ENCODE measurements at regions of chr19 and their contacts with region 1.

Region 1: GRCh38 chr19:6460101-6460853 is 685 bp upstream of the SLC25A23 start:
- DNase-seq: peak; percentile 93 to 98 (median 96)
- ATAC-seq: peak; percentile 85
- H3K4me3 ChIP-seq: peak overlapping the region; percentile 73 to 87
- H3K4me3 Mint-ChIP-seq: peak overlapping the region; percentile 94
- H3K27ac ChIP-seq: peak overlapping the region; percentile 62 to 69
- H3K27ac Mint-ChIP-seq: peak overlapping the region; percentile 81
- H3K4me1 ChIP-seq: peaks cover 20% of the 10 kb centered on the region
- H3K4me1 Mint-ChIP-seq: peaks cover 32% of the 10 kb centered on the region
- H3K27me3 ChIP-seq: peaks cover 0 to 3% of the 10 kb centered on the region in 2 experiments
- H3K27me3 Mint-ChIP-seq: no peaks in the 10 kb centered on the region
- CTCF ChIP-seq: peak; percentile 54

Region 2: DNA sequence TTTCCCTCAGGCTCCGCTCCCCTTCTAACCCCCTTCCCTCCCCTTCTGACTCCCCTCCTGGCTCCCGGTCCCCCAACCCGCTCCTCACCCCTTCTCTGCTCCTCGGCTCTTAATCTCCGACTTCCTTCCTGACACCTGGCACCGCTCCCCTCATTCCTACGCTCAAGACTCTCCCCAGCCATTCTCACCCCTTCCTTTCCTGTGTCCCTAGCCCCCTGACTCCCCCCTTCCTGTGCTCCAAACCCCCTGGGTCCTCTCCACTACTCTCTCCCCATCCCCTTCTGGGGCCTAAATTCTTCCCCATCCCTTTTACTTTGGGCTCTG is 98.3 kb before region 1 on chr19:
- CTCF ChIA-PET with region 1: no interaction called
- POLR2A ChIA-PET with region 1: no interaction called
- intact Hi-C with region 1: loop called in 1 of 2 experiments (anchors 1 kb)
- DNase-seq: no peak
- ATAC-seq: peak; percentile 1
- H3K4me3 ChIP-seq: peak overlapping the region; percentile 78 to 79
- H3K4me3 Mint-ChIP-seq: peak overlapping the region; percentile 93
- H3K27ac ChIP-seq: peak overlapping the region; percentile 72 to 85
- H3K27ac Mint-ChIP-seq: peak overlapping the region; percentile 94
- H3K4me1 ChIP-seq: peaks cover 21% of the 10 kb centered on the region
- H3K4me1 Mint-ChIP-seq: peaks cover 25% of the 10 kb centered on the region
- H3K27me3 ChIP-seq: no peaks in the 10 kb centered on the region
- H3K27me3 Mint-ChIP-seq: no peaks in the 10 kb centered on the region
- CTCF ChIP-seq: no peak

Region 3: GRCh38 chr19:6476155-6476895 is 16.0 kb after region 1 on chr19:
- CTCF ChIA-PET with region 1: no interaction called
- POLR2A ChIA-PET with region 1: interaction called, 6 read pairs
- intact Hi-C with region 1: loop called (anchors 1 kb)
- DNase-seq: peak; percentile 21 to 76 (median 57)
- ATAC-seq: peak; percentile 99
- H3K4me3 ChIP-seq: no peak overlapping the region
- H3K4me3 Mint-ChIP-seq: no peak overlapping the region
- H3K27ac ChIP-seq: no peak overlapping the region
- H3K27ac Mint-ChIP-seq: peak overlapping the region; percentile 27
- H3K4me1 ChIP-seq: peaks cover 19% of the 10 kb centered on the region
- H3K4me1 Mint-ChIP-seq: peaks cover 23% of the 10 kb centered on the region
- H3K27me3 ChIP-seq: no peaks in the 10 kb centered on the region
- H3K27me3 Mint-ChIP-seq: no peaks in the 10 kb centered on the region
- CTCF ChIP-seq: no peak

Region 4: DNA sequence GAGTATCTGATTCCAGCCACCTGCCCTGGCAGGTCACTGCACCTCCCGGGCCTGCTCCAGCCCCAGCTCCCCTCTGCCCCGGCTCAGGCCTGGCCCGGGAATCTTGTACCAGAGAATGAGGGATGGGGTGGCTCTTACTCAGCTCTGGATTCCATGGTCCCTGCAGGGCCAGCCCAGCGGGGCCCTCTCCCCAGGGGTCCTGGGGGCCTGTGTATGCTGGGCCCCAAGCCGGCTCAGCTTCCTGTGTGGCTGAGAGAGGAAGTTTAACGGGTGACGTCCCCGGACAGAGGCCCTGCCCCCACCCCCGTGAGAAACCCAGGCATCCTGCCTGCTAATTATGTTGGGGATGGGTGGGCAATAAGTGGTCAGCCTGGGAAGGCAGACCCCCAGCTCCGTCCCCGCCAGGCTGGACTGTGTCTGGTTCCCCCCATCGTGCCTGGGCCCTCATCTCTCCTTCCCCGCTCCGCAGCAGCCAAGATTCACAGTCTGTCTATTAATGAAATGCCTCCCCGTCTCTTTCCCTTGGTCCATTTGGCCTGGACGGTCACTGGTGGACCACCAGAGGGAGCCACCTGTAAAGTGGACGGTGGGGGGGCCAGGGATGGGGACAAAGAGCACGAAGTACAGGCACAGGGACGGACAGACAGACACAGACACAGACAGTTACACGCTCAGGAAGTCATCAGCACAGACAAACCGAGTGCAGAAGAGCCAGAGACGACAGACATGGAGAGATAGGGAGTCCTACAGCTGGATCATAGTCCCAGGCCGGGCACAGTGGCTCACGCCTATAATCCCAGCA is 21.5 kb after region 1 on chr19 and contains the start of gene DENND1C:
- CTCF ChIA-PET with region 1: no interaction called
- POLR2A ChIA-PET with region 1: interaction called, 6 read pairs
- intact Hi-C with region 1: loop called (anchors 1 kb)
- DNase-seq: peak in 8 of 9 experiments; percentile 61 to 84 (median 72)
- ATAC-seq: peak; percentile 88
- H3K4me3 ChIP-seq: peak within 1 kb of the TSS; percentile 89 to 95
- H3K4me3 Mint-ChIP-seq: peak within 1 kb of the TSS; percentile 98
- H3K27ac ChIP-seq: peak within 1 kb of the TSS; percentile 92 to 93
- H3K27ac Mint-ChIP-seq: peak within 1 kb of the TSS; percentile 96
- H3K4me1 ChIP-seq: peaks cover 33% of the 10 kb centered on the region
- H3K4me1 Mint-ChIP-seq: peaks cover 38% of the 10 kb centered on the region
- H3K27me3 ChIP-seq: no peaks in the 10 kb centered on the region
- H3K27me3 Mint-ChIP-seq: no peaks in the 10 kb centered on the region
- CTCF ChIP-seq: no peak
- total RNA-seq, gene DENND1C: 94.0 to 95.9 TPM

Region 5: GRCh38 chr19:6501740-6502648 is 41.7 kb after region 1 on chr19 and contains the start of gene TUBB4A:
- CTCF ChIA-PET with region 1: no interaction called
- POLR2A ChIA-PET with region 1: no interaction called
- intact Hi-C with region 1: loop called (anchors 1 kb)
- DNase-seq: peak in 8 of 9 experiments; percentile 18 to 73 (median 46)
- ATAC-seq: peak; percentile 52
- H3K4me3 ChIP-seq: peak within 1 kb of the TSS; percentile 48 to 56
- H3K4me3 Mint-ChIP-seq: peak within 1 kb of the TSS; percentile 85
- H3K27ac ChIP-seq: no peak within 1 kb of the TSS
- H3K27ac Mint-ChIP-seq: no peak within 1 kb of the TSS
- H3K4me1 ChIP-seq: peaks cover 4% of the 10 kb centered on the region
- H3K4me1 Mint-ChIP-seq: peaks cover 27% of the 10 kb centered on the region
- H3K27me3 ChIP-seq: peaks cover 0 to 3% of the 10 kb centered on the region in 2 experiments
- H3K27me3 Mint-ChIP-seq: no peaks in the 10 kb centered on the region
- CTCF ChIP-seq: no peak
- total RNA-seq, gene TUBB4A: 1.4 to 1.6 TPM

Measured in CD8-positive, alpha-beta T cell (primary cell).